Endothelial cell of umbilical vein (primary cell): ENCODE measurements at regions of chr3 and their contacts with region 1.

Region 1: DNA sequence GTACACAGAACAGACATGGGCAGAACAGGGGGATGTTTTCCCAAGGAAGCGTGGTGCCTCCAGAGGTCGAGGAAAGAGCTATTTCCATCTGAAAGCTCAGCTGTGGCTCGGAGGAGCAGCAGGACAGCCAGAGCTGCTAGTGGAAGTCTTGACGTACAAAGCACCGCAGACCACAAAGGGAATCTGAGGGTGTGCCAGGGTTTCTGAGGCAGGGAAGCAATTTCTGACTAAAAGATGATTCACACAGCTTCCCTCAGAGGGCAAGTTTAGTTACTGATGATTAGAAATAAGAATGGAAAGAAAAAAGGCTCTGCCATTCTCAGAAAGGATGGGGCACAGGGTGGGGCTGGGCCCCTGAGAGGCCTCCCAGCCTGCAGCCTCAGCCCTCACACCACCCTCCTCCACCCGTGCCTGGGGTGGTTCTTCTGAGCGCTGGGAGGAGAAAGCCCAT is 45.8 kb upstream of the SEC13 start:
- DNase-seq: peak; percentile 63
- H3K4me3 ChIP-seq: no peak overlapping the region
- H3K27ac ChIP-seq: no peak overlapping the region
- H3K4me1 ChIP-seq: no peaks in the 10 kb centered on the region
- H3K27me3 ChIP-seq: no peaks in the 10 kb centered on the region
- CTCF ChIP-seq: no peak
- POLR2A ChIP-seq: no peak

Region 2: DNA sequence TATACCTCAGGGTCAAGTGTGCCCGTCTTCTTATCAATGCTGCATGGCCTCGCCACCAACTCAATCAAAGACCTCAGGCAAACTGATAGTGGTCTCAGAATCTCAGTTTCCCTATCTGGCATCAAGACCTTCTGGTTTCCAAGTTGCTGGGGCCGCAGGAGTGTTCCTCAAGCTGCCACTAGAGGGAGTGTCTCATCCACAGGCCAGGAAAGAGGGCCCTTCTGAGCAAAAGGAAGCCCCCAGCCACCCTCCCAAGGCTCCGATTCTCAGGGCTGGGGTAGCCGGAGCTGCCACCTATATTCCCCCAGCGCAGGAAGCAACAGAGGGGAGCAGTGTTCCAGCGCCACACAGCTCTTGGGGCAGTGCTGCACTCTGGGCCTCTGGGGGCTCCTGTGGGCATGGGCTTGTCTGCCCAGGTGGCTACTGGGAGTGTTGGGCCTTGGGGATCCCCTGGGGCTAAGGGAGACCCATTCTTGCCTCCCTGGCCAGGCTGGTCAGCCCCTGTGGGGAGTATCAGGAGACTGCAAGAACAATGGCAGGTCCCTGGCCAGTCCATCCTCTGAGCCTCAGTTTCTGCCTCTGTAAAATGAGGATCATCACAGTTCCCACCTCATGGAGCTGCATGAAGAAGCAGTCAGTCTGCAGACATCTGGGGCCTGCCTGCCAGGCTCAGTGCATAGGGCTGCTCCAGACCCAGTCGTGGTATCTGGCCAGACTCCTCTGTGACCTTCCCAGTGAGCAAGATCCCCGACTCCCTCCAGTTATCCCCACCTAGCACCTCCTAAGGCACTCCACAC is 22.3 kb before region 1 on chr3:
- CTCF ChIA-PET with region 1: interaction called, 10 read pairs
- POLR2A ChIA-PET with region 1: no interaction called
- dilution Hi-C with region 1: no loop called
- intact Hi-C with region 1: no loop called
- DNase-seq: peak; percentile 43
- H3K4me3 ChIP-seq: no peak overlapping the region
- H3K27ac ChIP-seq: no peak overlapping the region
- H3K4me1 ChIP-seq: no peaks in the 10 kb centered on the region
- H3K27me3 ChIP-seq: no peaks in the 10 kb centered on the region
- CTCF ChIP-seq: peak; percentile 89 to 94
- POLR2A ChIP-seq: no peak

Region 3: GRCh38 chr3:10404377-10404776 is 37.7 kb after region 1 on chr3:
- CTCF ChIA-PET with region 1: no interaction called
- POLR2A ChIA-PET with region 1: no interaction called
- dilution Hi-C with region 1: no loop called
- intact Hi-C with region 1: loop called (anchors 2 kb)
- DNase-seq: no peak
- H3K4me3 ChIP-seq: no peak overlapping the region
- H3K27ac ChIP-seq: no peak overlapping the region
- H3K4me1 ChIP-seq: no peaks in the 10 kb centered on the region
- H3K27me3 ChIP-seq: no peaks in the 10 kb centered on the region
- CTCF ChIP-seq: no peak
- POLR2A ChIP-seq: no peak

Region 4: DNA sequence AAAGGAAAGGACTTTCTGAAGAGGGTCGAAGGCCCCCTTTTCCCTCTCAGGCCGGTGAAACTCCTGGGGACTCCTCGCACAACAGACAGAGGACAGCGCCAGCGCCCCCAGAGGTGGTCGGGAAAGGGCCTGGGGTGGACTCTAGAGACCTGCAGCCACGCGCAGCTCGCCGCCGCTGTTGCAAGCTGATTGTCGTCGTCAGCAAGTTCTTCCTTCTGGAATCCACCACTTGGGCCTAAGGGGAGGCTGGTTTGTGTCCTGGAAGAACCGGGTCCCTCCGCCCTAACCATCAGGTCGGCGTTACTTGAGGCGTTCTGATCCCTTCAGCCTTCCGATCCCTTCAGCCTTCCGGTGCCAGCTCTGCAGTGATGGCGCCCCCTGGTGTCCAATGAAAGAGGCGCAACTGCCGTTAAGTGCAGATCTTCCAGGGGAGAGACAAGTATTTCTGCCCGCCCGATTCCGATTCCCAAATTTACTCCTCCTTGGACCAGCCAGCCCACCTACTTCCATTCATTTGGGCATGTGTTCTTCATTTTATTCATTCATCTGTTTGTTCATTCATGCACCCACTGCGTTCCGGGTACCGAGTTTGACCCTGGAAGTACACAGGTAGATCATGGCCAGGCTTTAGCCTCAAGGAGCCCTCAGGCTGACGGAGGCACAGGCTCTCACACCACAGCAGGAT is 372.2 kb after region 1 on chr3:
- CTCF ChIA-PET with region 1: interaction called, 13 read pairs
- POLR2A ChIA-PET with region 1: no interaction called
- dilution Hi-C with region 1: no loop called
- intact Hi-C with region 1: no loop called
- DNase-seq: peak; percentile 70
- H3K4me3 ChIP-seq: peak overlapping the region in 1 of 3 experiments; percentile 18
- H3K27ac ChIP-seq: no peak overlapping the region
- H3K4me1 ChIP-seq: no peaks in the 10 kb centered on the region
- H3K27me3 ChIP-seq: peaks cover 0 to 5% of the 10 kb centered on the region in 2 experiments
- CTCF ChIP-seq: peak; percentile 75 to 89
- POLR2A ChIP-seq: no peak